Breast epithelium (tissue), 4 donors: ENCODE measurements at regions of chr5 and their contacts with region 1.

Region 1: GRCh38 chr5:140557136-140557805 is at the start of gene SRA1:
- DNase-seq: peak; percentile 87 to 92
- H3K4me3 ChIP-seq: peak within 1 kb of the TSS; percentile 81 to 91 (median 81)
- H3K27ac ChIP-seq: peak within 1 kb of the TSS; percentile 94 to 96
- H3K4me1 ChIP-seq: peaks cover 0 to 10% of the 10 kb centered on the region in 2 donors
- H3K27me3 ChIP-seq: no peaks in the 10 kb centered on the region
- CTCF ChIP-seq: no peak
- POLR2A ChIP-seq: peak; percentile 92
- total RNA-seq, gene SRA1: 13.6 to 28.4 (median 24.9) TPM

Region 2: GRCh38 chr5:140432916-140433315 is 124.4 kb before region 1 on chr5:
- intact Hi-C with region 1: no loop called
- DNase-seq: no peak
- H3K4me3 ChIP-seq: no peak overlapping the region
- H3K27ac ChIP-seq: no peak overlapping the region
- H3K4me1 ChIP-seq: no peaks in the 10 kb centered on the region
- H3K27me3 ChIP-seq: no peaks in the 10 kb centered on the region
- CTCF ChIP-seq: no peak
- POLR2A ChIP-seq: no peak

Region 3: GRCh38 chr5:140639148-140639979 is 82.1 kb after region 1 on chr5 and contains the start of gene TMCO6:
- intact Hi-C with region 1: loop called (anchors 5 kb)
- DNase-seq: peak; percentile 95 to 98
- H3K4me3 ChIP-seq: peak within 1 kb of the TSS; percentile 74 to 86 (median 82)
- H3K27ac ChIP-seq: peak within 1 kb of the TSS; percentile 89 to 95
- H3K4me1 ChIP-seq: peaks cover 0 to 16% of the 10 kb centered on the region in 2 donors
- H3K27me3 ChIP-seq: no peaks in the 10 kb centered on the region
- CTCF ChIP-seq: peak in 2 of 3 donors; percentile 57 to 58
- POLR2A ChIP-seq: peak; percentile 50
- total RNA-seq, gene TMCO6: 23.0 to 45.4 (median 34.1) TPM